ENCODE measurements at regions of chr12 and their contacts with region 1.

Region 1: GRCh38 chr12:54368709-54369583 is 4.7 kb upstream of the GPR84 start:
- DNase-seq: peak; percentile 93 to 97
- H3K4me3 ChIP-seq: peak overlapping the region; percentile 34 to 43 (median 42)
- H3K27ac ChIP-seq: peak overlapping the region in 4 of 5 donors; percentile 20 to 76 (median 71)
- H3K4me1 ChIP-seq: peaks cover 29 to 56% (median 44%) of the 10 kb centered on the region in 4 donors
- H3K27me3 ChIP-seq: peaks cover 0 to 6% (median 0%) of the 10 kb centered on the region in 3 donors
- CTCF ChIP-seq: peak in 5 of 7 experiments; percentile 50 to 85 (median 69)
- EP300 ChIP-seq: no peak
- POLR2A ChIP-seq: no peak

Region 2: DNA sequence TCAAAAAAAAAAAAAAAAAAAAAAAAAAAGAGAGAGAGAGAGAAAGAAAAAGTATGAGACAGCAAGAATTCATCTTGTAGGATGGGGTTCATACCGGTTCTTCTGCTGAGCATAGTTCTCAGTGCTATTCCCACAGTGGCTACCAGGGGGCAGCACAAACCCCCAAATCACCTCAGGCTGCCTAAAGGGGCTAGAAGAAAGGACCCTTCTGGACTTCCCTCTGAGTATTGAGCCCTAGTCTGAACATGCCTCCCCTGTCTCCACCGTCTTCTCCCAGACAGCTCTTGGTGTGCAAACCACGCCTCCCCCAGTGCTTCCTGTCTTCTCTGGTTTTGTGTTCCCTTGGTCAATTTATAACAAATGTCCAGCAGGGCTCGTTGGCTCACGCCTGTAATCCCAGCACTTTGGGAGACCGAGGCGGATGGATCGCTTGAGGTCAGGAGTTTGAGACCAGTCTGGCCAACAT is 148.8 kb before region 1 on chr12:
- intact Hi-C with region 1: loop called (anchors 10 kb)
- DNase-seq: peak; percentile 70 to 92
- H3K4me3 ChIP-seq: no peak overlapping the region
- H3K27ac ChIP-seq: no peak overlapping the region
- H3K4me1 ChIP-seq: peaks cover 16 to 38% (median 30%) of the 10 kb centered on the region in 4 donors
- H3K27me3 ChIP-seq: peaks cover 11 to 49% (median 27%) of the 10 kb centered on the region in 3 donors
- CTCF ChIP-seq: peak in 5 of 7 experiments; percentile 62 to 81 (median 75)
- EP300 ChIP-seq: no peak
- POLR2A ChIP-seq: no peak

Region 3: GRCh38 chr12:54259194-54260011 is 109.5 kb before region 1 on chr12:
- intact Hi-C with region 1: no loop called
- DNase-seq: peak; percentile 55 to 96
- H3K4me3 ChIP-seq: peak overlapping the region; percentile 39 to 42 (median 40)
- H3K27ac ChIP-seq: peak overlapping the region; percentile 61 to 83 (median 78)
- H3K4me1 ChIP-seq: peaks cover 18 to 56% (median 38%) of the 10 kb centered on the region in 4 donors
- H3K27me3 ChIP-seq: no peaks in the 10 kb centered on the region
- CTCF ChIP-seq: no peak
- EP300 ChIP-seq: no peak
- POLR2A ChIP-seq: no peak

Region 4: DNA sequence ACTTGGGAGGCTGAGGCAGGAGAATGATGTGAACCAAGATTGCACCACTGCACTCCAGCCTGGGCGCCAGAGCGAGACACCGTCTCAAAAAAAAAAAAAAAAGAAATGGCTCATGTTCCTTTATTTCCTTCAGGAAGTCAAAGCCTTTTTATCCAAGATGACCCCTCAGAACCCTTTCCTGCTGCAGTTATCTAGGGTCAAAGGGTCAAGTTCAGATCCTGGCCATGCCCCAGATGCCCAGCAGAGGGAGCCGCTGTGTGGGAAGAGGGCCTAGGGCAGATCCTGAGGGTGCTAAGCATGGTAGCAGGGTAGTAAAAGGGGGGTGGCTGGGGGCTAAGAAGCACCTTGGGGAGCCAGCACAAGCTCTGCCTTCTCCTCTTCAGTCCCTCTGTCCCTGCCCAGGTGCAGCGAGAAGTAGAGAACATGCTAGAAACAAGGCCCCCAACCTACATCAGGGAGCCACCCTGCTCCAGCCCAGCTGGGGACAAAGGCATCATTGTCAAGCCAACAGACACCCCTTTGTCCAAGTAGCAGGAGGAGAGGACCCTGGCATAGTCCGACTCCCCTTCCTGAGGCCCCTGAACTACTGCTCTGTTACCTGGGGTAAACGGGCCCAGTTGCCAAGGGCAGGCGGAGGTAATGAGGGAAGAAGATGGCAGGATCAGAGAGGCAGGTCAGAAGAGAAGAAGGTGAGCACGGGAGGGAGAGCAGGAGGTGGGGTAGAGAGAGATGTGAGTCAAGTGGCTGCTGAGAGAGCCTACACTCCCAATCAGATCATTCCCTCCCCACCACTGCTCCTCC is 74.6 kb before region 1 on chr12:
- intact Hi-C with region 1: loop called (anchors 10 kb)
- DNase-seq: peak; percentile 68 to 76
- H3K4me3 ChIP-seq: peak overlapping the region in 1 of 4 donors; percentile 18
- H3K27ac ChIP-seq: peak overlapping the region in 1 of 5 donors; percentile 35
- H3K4me1 ChIP-seq: peaks cover 0 to 19% (median 0%) of the 10 kb centered on the region in 4 donors
- H3K27me3 ChIP-seq: peaks cover 0 to 15% (median 0%) of the 10 kb centered on the region in 3 donors
- CTCF ChIP-seq: peak in 5 of 7 experiments; percentile 60 to 82 (median 77)
- EP300 ChIP-seq: no peak
- POLR2A ChIP-seq: no peak

Region 5: DNA sequence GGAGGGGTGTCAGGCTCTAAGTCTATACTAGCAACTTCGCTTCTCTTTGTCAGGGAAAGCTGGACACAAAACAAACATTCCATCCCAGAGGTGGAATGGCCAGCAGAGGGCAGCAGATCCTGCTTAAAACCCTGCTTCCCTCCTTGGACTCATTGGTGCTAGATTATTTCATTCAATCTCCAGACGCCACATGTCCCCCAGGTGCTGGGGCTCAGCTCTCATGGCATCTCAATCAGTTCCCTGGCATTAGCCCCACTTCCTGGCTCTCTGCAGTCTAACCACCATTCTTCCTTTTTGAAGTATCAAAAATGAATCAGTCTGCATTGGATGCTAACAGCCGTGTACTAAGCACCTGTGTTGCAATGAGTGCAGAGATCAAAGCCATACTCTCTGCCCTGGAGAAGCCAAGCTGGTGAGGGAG is 227.6 kb after region 1 on chr12:
- intact Hi-C with region 1: no loop called
- DNase-seq: peak; percentile 79 to 88
- H3K4me3 ChIP-seq: no peak overlapping the region
- H3K27ac ChIP-seq: no peak overlapping the region
- H3K4me1 ChIP-seq: peaks cover 0 to 13% (median 4%) of the 10 kb centered on the region in 4 donors
- H3K27me3 ChIP-seq: no peaks in the 10 kb centered on the region
- CTCF ChIP-seq: peak in 4 of 7 experiments; percentile 68 to 80 (median 73)
- EP300 ChIP-seq: no peak
- POLR2A ChIP-seq: no peak